ENCODE measurements at regions of chr16 and their contacts with region 1.

Region 1: DNA sequence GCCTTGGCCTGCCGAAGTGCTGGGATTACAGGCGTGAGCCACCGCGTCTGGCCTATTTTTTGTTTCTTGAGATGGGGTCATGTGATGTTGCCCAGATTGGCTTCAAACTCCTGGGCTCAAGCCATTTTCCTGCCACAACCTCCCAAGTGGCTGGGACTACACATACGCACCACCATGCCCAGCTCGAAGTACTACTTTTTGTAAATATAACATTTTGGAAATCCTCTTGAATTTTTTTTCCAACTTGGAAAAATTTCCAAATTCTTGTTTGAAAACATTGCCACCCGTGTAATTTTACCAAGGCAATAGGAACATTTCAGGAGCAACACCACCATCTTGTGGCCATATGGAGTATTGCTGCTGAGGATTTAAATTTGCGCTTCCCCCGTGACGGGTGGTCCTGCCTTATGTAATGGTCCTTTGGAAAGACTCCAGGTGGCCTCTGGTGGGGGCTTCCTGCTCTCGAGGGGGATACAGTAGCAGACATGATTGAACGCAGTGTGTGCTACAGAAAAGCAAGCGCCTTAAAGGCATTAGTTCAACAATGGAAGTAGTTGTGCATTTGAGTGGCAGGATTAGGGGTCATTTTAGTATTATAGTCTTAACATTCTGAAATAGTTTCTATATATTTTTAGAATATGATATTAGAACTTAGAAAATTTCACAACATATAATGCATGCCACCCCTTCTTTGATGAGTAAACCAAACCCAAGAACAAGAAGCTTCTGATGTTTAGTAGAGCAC is 8.0 kb downstream of the FLYWCH1 start:
- DNase-seq: peak; percentile 64 to 91
- H3K4me3 ChIP-seq: no peak overlapping the region
- CTCF ChIP-seq: peak in 1 of 3 donors; percentile 90
- POLR2A ChIP-seq: no peak

Region 2: GRCh38 chr16:2874912-2875362 is 44.7 kb before region 1 on chr16:
- intact Hi-C with region 1: loop called (anchors 5 kb)
- DNase-seq: peak; percentile 60 to 94
- H3K4me3 ChIP-seq: no peak overlapping the region
- CTCF ChIP-seq: peak in 1 of 3 donors; percentile 87
- POLR2A ChIP-seq: no peak

Region 3: DNA sequence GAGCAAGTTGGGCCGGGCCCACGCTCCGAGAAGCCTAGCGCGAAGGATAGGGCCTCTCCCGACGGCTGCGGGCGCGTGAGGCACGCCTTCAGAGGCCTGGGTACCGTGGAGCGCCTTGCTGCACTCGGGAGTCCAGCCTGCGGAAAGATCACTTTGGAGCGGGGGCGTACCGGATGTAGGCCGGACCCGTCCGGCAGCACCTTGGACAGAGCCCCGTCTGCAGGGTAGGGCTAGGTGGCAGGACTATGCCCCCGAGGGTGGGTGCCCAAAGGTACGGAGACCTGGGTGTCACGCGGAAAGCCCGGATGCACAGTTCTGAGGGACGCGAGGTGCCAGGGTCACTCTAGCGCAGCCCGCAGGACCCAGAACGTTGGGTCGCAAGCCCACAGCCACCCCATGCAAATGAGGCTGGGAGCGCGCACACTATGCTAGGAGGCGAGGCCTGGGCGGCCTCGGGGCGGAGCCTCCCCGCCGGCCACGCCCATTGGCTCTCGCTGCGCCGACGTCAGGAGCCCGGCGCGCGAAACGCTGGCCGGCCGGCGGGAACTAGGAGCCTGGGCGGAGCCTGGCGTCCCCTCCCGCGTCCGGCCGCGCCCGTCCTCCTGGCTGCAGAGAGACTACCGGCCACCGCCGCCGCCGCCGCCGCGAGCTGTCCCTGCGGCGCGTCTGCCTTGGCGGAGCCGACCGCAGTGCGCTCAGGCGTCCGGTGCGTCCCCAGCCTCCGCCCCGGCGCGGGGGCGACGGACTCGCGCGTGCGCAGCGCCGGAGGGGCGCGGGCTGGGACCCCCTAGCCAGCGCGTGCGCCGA is 49.3 kb after region 1 on chr16 and contains the start of gene PAQR4:
- intact Hi-C with region 1: no loop called
- DNase-seq: peak; percentile 73 to 96
- H3K4me3 ChIP-seq: peak within 1 kb of the TSS; percentile 51
- CTCF ChIP-seq: no peak
- POLR2A ChIP-seq: no peak
- total RNA-seq, gene PAQR4: 6.2 to 17.9 (median 10.6) TPM

Region 4: DNA sequence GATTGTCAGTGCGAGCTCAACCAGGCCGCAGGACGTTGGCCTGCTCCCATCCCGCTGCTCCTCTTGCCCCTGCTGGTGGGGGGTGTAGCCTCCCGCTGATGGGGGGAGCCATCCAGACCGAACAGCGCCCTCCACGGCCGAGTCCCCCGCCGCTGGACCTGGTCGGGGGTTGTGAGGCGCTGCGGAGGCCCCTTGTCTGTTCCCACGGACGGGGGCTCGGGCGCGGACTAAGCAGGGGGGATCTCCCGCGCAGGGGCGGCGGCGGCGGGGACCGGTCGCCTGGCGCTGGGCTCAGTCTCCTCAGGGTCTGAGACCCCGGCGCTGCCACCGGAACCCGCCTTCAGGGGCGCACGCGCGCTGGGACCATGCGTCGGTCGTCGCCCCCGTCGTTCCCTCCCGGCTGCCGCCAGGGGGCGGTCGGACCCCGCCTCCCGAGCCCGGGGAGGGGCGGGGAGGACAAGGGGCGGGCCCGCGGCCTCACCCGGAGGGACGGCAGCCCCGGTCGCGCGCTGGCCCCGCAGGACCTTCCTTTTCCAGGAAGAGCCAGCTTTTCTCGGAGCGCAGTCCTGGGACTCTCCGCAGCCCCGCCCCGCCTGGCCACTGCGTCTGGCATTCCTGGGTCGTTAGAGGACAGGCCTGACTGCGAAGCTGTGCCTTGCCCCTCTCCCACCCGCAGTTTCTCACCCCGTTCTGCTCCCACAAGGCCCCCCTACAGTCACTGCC is 139.5 kb after region 1 on chr16:
- intact Hi-C with region 1: no loop called
- DNase-seq: peak; percentile 67 to 96
- H3K4me3 ChIP-seq: peak overlapping the region; percentile 50
- CTCF ChIP-seq: no peak
- POLR2A ChIP-seq: no peak

Measured in lower leg skin (tissue), 4 donors.